BJ (cell line): ENCODE measurements at regions of chr3 and their contacts with region 1.

Region 1: GRCh38 chr3:48439820-48440589 is at the starts of genes CCDC51 and TMA7:
- DNase-seq: peak; percentile 77
- H3K4me3 ChIP-seq: peak within 1 kb of the TSS; percentile 68
- H3K27me3 ChIP-seq: no peaks in the 10 kb centered on the region
- CTCF ChIP-seq: no peak
- polyA plus RNA-seq, gene CCDC51: 11.6 and 14.3 TPM in 2 replicates
- polyA plus RNA-seq, gene TMA7: 53.8 and 162 TPM in 2 replicates

Region 2: GRCh38 chr3:48112813-48113212 is 327.2 kb before region 1 on chr3:
- CTCF ChIA-PET with region 1: no interaction called
- POLR2A ChIA-PET with region 1: no interaction called
- DNase-seq: no peak
- H3K4me3 ChIP-seq: no peak overlapping the region
- H3K27me3 ChIP-seq: no peaks in the 10 kb centered on the region
- CTCF ChIP-seq: no peak

Region 3: DNA sequence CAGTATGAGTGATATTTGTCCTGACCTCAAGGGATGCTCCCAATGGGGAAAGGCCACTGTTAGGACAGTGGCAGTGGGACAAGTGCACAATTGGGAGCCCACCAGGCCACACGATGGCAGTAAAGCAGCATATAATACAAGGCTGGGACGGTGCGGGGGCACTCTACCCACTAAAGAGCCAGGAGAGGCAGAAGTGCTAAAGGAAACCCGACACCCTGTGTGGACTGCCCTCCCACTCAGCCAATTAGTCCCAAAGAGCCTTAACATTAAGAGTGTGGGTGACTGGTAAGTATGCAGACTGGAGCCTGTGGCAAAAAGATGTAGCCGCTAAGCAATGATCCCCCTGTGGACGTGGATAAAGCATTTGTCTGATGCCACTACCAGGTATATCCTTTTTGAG is 207.3 kb before region 1 on chr3:
- CTCF ChIA-PET with region 1: interaction called, 37 read pairs
- POLR2A ChIA-PET with region 1: interaction called, 3 read pairs
- DNase-seq: no peak
- H3K4me3 ChIP-seq: no peak overlapping the region
- H3K27me3 ChIP-seq: no peaks in the 10 kb centered on the region
- CTCF ChIP-seq: peak; percentile 60

Region 4: DNA sequence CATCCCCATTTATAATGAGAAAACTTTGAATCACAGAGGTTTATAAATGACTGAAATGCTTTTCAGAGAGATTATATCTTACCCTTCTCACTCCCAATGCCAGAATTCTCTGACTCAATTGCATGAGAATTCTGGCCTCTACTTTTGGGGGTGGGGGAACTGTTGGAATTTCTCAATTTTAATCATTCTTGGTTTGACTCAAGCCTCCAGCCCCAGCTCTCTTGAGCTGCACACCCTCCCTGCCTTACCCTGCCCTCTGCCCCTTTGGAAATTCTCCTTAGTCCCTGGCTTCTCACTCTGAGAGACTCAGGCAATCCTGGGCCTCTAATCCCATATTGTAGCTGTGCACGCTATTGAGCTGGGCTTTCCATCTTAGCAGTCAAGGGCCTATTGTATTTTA is 154.9 kb before region 1 on chr3:
- CTCF ChIA-PET with region 1: interaction called, 66 read pairs
- POLR2A ChIA-PET with region 1: no interaction called
- DNase-seq: peak; percentile 49
- H3K4me3 ChIP-seq: no peak overlapping the region
- H3K27me3 ChIP-seq: no peaks in the 10 kb centered on the region
- CTCF ChIP-seq: no peak

Region 5: GRCh38 chr3:48400824-48401433 is 39.1 kb before region 1 on chr3:
- CTCF ChIA-PET with region 1: interaction called, 252 read pairs
- POLR2A ChIA-PET with region 1: no interaction called
- DNase-seq: no peak
- H3K4me3 ChIP-seq: no peak overlapping the region
- H3K27me3 ChIP-seq: peaks cover 2% of the 10 kb centered on the region
- CTCF ChIP-seq: peak; percentile 77

Region 6: GRCh38 chr3:48429317-48429959 is 10.6 kb before region 1 on chr3:
- CTCF ChIA-PET with region 1: interaction called, 55 read pairs
- POLR2A ChIA-PET with region 1: interaction called, 3 read pairs
- DNase-seq: no peak
- H3K4me3 ChIP-seq: peak overlapping the region; percentile 72
- H3K27me3 ChIP-seq: no peaks in the 10 kb centered on the region
- CTCF ChIP-seq: no peak

Region 7: GRCh38 chr3:48504051-48504946 is 64.3 kb after region 1 on chr3 and contains the start of gene SHISA5:
- CTCF ChIA-PET with region 1: no interaction called
- POLR2A ChIA-PET with region 1: no interaction called
- DNase-seq: no peak
- H3K4me3 ChIP-seq: peak within 1 kb of the TSS; percentile 88
- H3K27me3 ChIP-seq: no peaks in the 10 kb centered on the region
- CTCF ChIP-seq: no peak
- polyA plus RNA-seq, gene SHISA5: 140 and 217 TPM in 2 replicates